Activated CD8-positive, alpha-beta memory T cell treated with anti-CD3 and anti-CD28 coated beads, Interleukin-2, amount 10 ng/mL, durations not matched to agents 7 days and 5 days (primary cell): ENCODE measurements at regions of chr20 and their contacts with region 1.

Region 1: DNA sequence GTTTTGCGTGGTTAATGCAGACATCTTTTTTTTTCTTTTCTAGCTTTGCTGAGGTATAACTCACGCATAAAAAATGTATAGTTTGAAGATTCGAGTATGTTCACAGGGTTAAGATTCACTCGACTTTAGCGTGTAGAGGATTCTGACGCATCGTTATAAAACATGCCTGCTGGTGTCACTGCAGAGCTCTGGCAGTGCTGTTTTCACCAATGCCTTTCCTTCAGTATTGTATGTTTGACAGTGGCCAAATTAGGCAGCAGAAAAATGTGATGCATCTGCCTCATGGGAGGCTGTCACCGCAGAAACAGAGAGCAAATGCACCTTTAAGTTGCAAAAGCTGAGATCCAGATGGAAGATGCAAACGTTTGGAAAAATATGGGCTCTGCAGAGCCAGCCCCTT is 18.0 kb upstream of the SIRPB2 start:
- DNase-seq: no peak
- ATAC-seq: no peak
- H3K4me3 Mint-ChIP-seq: no peak overlapping the region
- H3K27ac Mint-ChIP-seq: no peak overlapping the region
- H3K4me1 Mint-ChIP-seq: no peaks in the 10 kb centered on the region
- H3K27me3 Mint-ChIP-seq: peaks cover 50% of the 10 kb centered on the region

Region 2: DNA sequence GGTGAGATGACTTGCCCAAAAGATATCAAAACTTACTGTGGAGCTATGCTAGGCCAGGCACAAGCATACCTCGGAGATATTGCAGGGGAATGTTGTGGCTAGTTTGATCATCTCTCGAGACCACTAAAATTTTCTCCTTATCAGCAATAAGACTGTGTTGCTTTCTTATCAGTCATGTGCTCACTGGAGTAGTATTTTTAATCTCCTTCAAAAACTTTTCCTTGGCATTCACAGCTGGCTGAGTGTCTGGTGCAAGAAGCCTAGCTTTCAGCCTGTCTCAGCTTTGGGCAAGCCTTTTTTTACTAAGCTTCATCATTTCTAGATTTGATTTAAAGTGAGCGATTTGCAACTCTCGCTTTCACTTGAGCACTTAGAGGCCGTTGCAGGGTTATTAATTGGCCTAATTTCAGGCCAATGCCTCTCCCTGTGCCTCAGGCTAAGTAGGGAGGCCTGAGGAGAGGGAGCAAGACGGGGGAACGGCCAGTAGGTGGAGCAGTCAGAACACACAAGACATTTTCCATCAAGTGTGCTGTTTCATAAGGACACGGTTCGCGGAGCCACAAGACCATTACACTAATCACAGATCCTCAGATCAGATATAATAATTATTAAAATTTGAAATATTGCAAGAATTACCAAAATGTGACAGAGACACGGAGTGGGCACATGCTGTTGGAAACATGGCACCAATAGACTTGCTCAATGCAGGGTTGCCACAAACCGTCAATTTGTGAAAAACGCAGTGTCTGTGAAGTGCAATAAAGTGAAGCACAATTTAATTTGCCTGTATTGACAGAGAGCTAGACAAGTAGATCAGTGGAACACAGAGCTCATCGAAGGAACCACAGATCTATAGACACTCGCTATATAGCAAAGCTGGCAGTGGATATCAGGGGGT is 255.1 kb after region 1 on chr20:
- CTCF ChIA-PET with region 1: interaction called, 11 read pairs
- DNase-seq: peak; percentile 71
- ATAC-seq: peak; percentile 69
- H3K4me3 Mint-ChIP-seq: no peak overlapping the region
- H3K27ac Mint-ChIP-seq: no peak overlapping the region
- H3K4me1 Mint-ChIP-seq: peaks cover 1% of the 10 kb centered on the region
- H3K27me3 Mint-ChIP-seq: peaks cover 13% of the 10 kb centered on the region